Activated naive CD8-positive, alpha-beta T cell treated with anti-CD3 and anti-CD28 coated beads, Interleukin-2, amount 10 ng/mL, durations not matched to agents 7 days and 5 days (primary cell): ENCODE measurements at regions of chr1 and their contacts with region 1.

Region 1: GRCh38 chr1:93078986-93079654 is at the start of gene MTF2:
- DNase-seq: peak; percentile 94
- ATAC-seq: peak; percentile 92
- H3K4me3 Mint-ChIP-seq: peak within 1 kb of the TSS; percentile 99
- H3K27ac Mint-ChIP-seq: peak within 1 kb of the TSS; percentile 97
- H3K4me1 Mint-ChIP-seq: peaks cover 28% of the 10 kb centered on the region
- H3K27me3 Mint-ChIP-seq: no peaks in the 10 kb centered on the region
- total RNA-seq, gene MTF2: 61.6 to 66.8 TPM

Region 2: GRCh38 chr1:93042187-93043056 is 36.7 kb before region 1 on chr1:
- POLR2A ChIA-PET with region 1: interaction called, 26 read pairs
- DNase-seq: peak; percentile 36
- ATAC-seq: peak; percentile 98
- H3K4me3 Mint-ChIP-seq: peak overlapping the region; percentile 86
- H3K27ac Mint-ChIP-seq: peak overlapping the region; percentile 95
- H3K4me1 Mint-ChIP-seq: peaks cover 22% of the 10 kb centered on the region
- H3K27me3 Mint-ChIP-seq: no peaks in the 10 kb centered on the region

Region 3: DNA sequence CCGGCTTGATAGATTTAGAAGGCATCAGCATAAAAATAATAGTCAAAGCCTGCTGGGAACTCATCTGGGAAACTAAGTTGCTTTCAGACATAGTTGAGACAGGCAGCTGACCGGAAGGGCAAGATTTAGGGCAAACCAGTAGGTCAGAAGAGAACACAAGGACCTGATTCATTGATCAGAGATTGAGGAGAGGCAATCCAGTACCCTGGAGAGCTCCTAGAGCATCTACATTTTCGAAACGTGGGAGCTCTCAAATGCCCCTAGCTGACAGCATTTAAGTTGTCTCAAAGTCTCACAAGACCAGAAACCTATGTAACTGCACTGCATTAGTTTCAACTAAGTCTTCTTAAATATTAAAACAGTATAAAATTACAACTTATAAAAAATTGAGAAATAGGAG is 22.9 kb before region 1 on chr1:
- POLR2A ChIA-PET with region 1: no interaction called
- DNase-seq: no peak
- ATAC-seq: no peak
- H3K4me3 Mint-ChIP-seq: no peak overlapping the region
- H3K27ac Mint-ChIP-seq: no peak overlapping the region
- H3K4me1 Mint-ChIP-seq: no peaks in the 10 kb centered on the region
- H3K27me3 Mint-ChIP-seq: peaks cover 16% of the 10 kb centered on the region

Region 4: GRCh38 chr1:93148001-93148400 is 68.9 kb after region 1 on chr1:
- POLR2A ChIA-PET with region 1: no interaction called
- DNase-seq: no peak
- ATAC-seq: no peak
- H3K4me3 Mint-ChIP-seq: no peak overlapping the region
- H3K27ac Mint-ChIP-seq: no peak overlapping the region
- H3K4me1 Mint-ChIP-seq: peaks cover 11% of the 10 kb centered on the region
- H3K27me3 Mint-ChIP-seq: no peaks in the 10 kb centered on the region

Region 5: GRCh38 chr1:93179886-93180722 is 101.0 kb after region 1 on chr1 and contains the start of gene TMED5:
- POLR2A ChIA-PET with region 1: interaction called, 26 read pairs
- DNase-seq: peak; percentile 96
- ATAC-seq: peak; percentile 85
- H3K4me3 Mint-ChIP-seq: peak within 1 kb of the TSS; percentile 100
- H3K27ac Mint-ChIP-seq: peak within 1 kb of the TSS; percentile 99
- H3K4me1 Mint-ChIP-seq: peaks cover 44% of the 10 kb centered on the region
- H3K27me3 Mint-ChIP-seq: no peaks in the 10 kb centered on the region
- total RNA-seq, gene TMED5: 48.2 to 52.3 TPM

Region 6: GRCh38 chr1:93345633-93346420 is 266.7 kb after region 1 on chr1 and contains the start of gene DR1:
- POLR2A ChIA-PET with region 1: interaction called, 29 read pairs
- DNase-seq: peak; percentile 94
- ATAC-seq: peak; percentile 74
- H3K4me3 Mint-ChIP-seq: peak within 1 kb of the TSS; percentile 96
- H3K27ac Mint-ChIP-seq: peak within 1 kb of the TSS; percentile 96
- H3K4me1 Mint-ChIP-seq: peaks cover 24% of the 10 kb centered on the region
- H3K27me3 Mint-ChIP-seq: no peaks in the 10 kb centered on the region
- total RNA-seq, gene DR1: 84.2 to 85.7 TPM

Region 7: GRCh38 chr1:93414749-93415148 is 335.6 kb after region 1 on chr1:
- POLR2A ChIA-PET with region 1: no interaction called
- DNase-seq: no peak
- ATAC-seq: no peak
- H3K4me3 Mint-ChIP-seq: no peak overlapping the region
- H3K27ac Mint-ChIP-seq: no peak overlapping the region
- H3K4me1 Mint-ChIP-seq: no peaks in the 10 kb centered on the region
- H3K27me3 Mint-ChIP-seq: peaks cover 17% of the 10 kb centered on the region